Dendritic cell treated with granulocyte-macrophage colony-stimulating factor and Interleukin-4, amounts not matched to agents 40 ng/mL and 50 ng/mL, for 4 days (primary cell): ENCODE measurements at regions of chr20 and their contacts with region 1.

Region 1: DNA sequence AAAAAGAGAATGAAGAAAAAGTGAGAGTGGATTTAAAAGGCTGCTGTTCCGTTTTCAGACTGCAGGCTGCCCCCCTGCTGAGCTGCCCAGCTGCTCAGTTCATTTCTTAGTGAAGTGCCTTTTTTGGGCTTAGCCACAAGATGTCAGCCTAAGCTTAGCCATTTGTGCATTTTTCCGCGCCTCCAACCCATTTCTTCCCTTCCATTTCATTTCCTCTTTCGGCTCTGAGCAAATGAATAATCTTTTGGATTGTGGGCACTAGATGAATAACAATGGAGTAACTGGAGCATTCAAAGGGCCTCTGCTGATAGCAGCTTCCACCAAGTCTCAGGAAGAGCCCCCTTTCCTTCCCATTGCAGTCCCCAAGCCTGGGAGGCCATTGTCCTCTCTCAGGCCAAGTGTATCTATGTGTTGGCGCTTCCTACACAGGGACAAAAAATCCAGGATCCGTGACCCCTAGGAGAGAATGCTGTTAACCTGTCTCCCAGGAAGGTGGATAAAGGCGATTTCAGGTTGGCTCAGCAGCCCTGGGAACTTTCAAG is 83.5 kb upstream of the SPTLC3 start:
- H3K4me3 Mint-ChIP-seq: no peak overlapping the region
- H3K27ac Mint-ChIP-seq: no peak overlapping the region
- H3K4me1 Mint-ChIP-seq: peaks cover 6% of the 10 kb centered on the region
- H3K27me3 Mint-ChIP-seq: peaks cover 3% of the 10 kb centered on the region

Region 2: GRCh38 chr20:12914804-12915203 is 10.5 kb before region 1 on chr20:
- intact Hi-C with region 1: no loop called
- H3K4me3 Mint-ChIP-seq: no peak overlapping the region
- H3K27ac Mint-ChIP-seq: no peak overlapping the region
- H3K4me1 Mint-ChIP-seq: no peaks in the 10 kb centered on the region
- H3K27me3 Mint-ChIP-seq: no peaks in the 10 kb centered on the region

Region 3: DNA sequence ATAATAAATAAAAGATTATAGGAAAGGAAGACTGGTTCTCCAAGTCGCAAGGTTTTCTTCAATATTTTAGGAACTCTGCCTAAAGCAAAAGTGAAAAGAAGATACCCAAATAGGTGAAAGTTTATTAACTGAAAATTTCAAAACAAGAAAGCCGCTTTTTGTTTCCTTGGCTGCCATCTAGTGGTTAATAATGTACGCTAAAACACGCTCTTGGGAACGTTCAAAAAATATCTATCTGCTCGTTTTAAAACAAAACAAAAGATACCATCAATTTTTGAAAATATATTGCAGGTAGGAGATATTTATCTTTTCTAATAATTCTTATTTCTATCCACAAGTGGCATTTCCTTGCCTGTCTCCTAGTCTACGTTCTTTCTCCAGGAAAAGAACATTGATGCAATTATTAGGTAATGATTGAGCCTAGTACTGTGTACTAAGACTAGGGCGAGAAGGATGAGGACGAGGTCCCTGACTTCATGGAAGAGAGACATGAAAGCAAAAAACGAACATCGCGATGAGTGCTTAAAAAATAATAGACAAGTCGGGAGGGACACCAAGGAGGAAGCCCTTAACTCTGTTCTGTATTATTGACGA is 180.7 kb after region 1 on chr20:
- intact Hi-C with region 1: loop called (anchors 1 kb)
- H3K4me3 Mint-ChIP-seq: no peak overlapping the region
- H3K27ac Mint-ChIP-seq: no peak overlapping the region
- H3K4me1 Mint-ChIP-seq: no peaks in the 10 kb centered on the region
- H3K27me3 Mint-ChIP-seq: no peaks in the 10 kb centered on the region

Region 4: GRCh38 chr20:13261460-13262301 is 336.4 kb after region 1 on chr20:
- intact Hi-C with region 1: loop called (anchors 10 kb)
- H3K4me3 Mint-ChIP-seq: no peak overlapping the region
- H3K27ac Mint-ChIP-seq: no peak overlapping the region
- H3K4me1 Mint-ChIP-seq: no peaks in the 10 kb centered on the region
- H3K27me3 Mint-ChIP-seq: no peaks in the 10 kb centered on the region

Region 5: DNA sequence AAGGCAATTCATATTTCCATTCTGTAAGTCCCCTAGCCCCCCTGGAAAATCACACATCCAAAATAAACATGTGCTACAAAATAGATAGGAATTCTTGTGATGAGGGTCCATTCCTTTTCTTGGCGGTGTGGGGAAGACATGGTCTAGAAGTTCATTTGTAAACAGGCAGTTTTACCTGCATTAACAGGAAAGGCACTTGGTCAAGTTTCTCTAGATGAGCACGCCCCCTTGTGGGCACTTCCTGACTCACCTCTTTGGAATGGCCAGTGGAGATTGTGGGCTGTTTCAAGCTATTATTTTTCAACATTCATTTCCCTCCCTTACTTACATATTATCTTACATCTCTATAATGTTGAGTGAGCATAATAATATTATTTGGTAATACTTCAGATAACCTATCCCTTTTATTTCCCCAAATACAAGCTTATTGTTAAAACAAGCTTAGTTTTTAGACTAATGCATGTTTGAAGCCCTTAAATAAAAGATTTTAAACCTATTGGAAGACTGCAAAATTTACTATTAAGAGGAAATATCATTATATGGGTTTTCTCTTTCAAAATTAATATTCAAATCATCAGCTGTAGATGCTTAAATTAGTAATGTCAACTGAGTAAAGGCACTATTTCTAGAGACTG is 621.3 kb after region 1 on chr20:
- intact Hi-C with region 1: loop called (anchors 10 kb)
- H3K4me3 Mint-ChIP-seq: no peak overlapping the region
- H3K27ac Mint-ChIP-seq: no peak overlapping the region
- H3K4me1 Mint-ChIP-seq: no peaks in the 10 kb centered on the region
- H3K27me3 Mint-ChIP-seq: no peaks in the 10 kb centered on the region

Region 6: DNA sequence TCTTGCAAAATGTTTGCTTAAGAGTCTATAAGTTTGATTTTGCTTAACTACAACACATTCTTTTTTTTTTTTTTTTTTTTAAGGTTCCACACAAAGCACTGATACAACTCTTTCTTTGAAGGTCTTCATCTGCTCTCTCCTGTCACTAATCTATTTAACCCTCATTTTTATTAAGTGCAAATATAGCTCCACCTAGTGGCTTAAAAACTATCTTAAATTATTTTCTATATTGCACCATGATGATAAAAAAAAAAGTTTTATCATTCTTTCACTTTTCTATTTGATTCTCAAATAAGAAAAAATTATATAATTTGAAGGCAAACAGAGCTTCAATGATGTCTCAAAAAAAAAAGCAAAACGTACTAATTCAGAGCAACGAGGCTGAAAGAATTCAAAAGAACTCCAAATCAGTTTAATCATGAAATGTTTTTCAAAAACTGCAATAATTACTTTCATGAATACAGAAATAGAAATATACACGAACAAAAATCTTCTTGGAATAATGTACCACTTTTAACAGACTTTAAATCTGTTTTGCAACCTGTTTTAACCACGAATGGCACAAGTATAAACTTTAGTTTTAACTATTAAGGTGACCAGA is 846.7 kb after region 1 on chr20:
- intact Hi-C with region 1: loop called (anchors 10 kb)
- H3K4me3 Mint-ChIP-seq: no peak overlapping the region
- H3K27ac Mint-ChIP-seq: no peak overlapping the region
- H3K4me1 Mint-ChIP-seq: peaks cover 4% of the 10 kb centered on the region
- H3K27me3 Mint-ChIP-seq: no peaks in the 10 kb centered on the region